ENCODE measurements at regions of chr1 and their contacts with region 1.

Region 1: GRCh38 chr1:54052934-54053744 is at the starts of genes TCEANC2 and TMEM59:
- DNase-seq: peak; percentile 98
- H3K4me3 Mint-ChIP-seq: no peak within 1 kb of the TSS
- H3K27ac Mint-ChIP-seq: no peak within 1 kb of the TSS
- H3K4me1 Mint-ChIP-seq: peaks cover 27% of the 10 kb centered on the region
- H3K27me3 Mint-ChIP-seq: no peaks in the 10 kb centered on the region
- total RNA-seq, gene TCEANC2: 11.8 and 12.0 TPM in 2 replicates
- total RNA-seq, gene TMEM59: 119 and 133 TPM in 2 replicates

Region 2: DNA sequence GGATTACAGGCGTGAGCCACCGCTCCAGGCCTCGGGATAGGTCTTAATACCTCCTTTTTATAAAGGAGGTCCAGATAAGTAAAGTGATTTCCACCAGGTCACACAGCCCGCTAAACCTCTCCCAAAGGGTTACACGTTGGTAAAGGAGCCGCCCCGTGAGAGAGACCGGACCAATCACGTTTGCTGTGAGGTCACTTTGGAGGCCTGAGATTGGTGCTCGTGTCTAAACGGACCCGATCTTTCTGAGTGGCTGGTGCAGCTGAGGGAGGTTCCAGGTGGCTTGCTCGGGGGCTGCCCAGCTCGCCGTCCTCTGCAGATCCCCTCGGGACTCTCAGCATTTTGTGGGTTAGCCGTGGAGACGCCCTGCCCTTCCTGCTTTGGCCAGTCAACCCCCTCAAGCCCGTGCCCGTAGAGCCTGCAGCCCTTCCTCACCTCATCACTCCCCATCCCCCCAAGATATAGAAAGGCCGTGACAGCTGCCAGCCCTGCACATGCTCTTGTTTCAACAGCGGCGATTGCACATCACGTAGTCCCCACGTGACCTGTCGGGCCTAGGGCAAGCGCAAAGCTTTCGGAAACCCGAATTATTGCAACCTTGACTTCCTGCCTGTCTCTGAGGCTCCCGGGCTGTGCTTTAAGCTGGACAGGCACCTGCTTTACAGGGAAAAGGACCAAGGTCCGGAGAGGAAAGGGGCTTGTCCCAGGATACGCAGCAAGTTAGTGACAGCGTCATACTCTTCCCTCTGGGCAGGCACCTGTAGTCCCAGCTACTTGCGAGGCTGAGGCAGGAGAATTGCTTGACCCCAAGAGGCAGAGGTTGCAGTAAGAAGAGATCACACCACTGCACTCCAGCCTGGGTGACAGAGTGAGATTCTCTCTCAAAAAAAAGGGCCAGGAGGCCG is 1350.0 kb before region 1 on chr1:
- intact Hi-C with region 1: loop called (anchors 5 kb)
- DNase-seq: peak; percentile 80
- H3K4me3 Mint-ChIP-seq: peak overlapping the region; percentile 82
- H3K27ac Mint-ChIP-seq: peak overlapping the region; percentile 88
- H3K4me1 Mint-ChIP-seq: peaks cover 32% of the 10 kb centered on the region
- H3K27me3 Mint-ChIP-seq: peaks cover 4% of the 10 kb centered on the region

Region 3: DNA sequence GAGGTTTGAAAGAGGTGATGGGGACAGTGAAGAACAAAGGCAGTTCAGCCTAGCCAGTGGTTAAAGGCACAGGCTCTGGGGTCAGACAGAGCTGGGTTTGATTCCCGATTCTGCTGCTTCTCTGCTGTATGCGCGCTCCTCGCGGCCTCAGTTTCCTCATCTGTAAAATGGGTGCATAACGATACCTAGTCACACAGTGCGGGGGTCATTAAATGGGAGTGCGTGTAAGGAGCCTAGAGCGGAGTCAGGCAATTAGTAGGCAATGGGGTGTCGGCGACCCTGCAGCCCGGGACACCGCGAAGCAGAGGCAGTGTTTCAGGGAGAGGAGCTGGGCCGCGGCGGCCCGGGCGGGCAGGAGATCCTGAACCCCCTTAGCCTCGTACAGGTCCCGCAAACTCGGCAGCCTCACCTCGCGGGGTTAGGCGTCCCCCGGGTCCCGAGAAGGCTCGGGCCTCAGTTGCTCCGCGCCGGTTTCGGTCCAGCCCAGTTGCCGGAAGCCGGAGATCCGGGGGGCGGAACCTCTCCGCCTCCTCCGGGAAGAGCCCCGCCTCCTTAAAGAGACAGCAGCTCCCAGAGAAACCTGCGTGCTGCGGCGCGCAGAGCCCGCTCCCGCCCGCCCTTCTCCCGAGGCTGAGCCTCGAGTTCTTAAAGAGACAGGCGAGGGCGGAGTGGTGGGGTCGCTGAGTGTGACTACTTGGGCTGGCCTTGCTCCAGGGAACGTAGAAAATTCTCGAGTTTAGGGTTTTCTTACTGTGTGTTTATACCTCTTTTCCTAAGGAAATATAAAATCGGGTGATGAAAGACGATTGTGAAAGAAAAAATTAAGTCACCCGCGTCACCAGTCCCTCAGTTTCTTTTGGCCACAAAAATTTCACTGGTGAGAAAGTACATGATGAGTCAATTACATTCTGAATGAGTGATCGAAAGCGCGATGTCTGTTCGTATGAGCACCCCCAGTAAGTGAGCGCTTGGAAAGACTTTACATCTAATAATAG is 163.5 kb before region 1 on chr1 and contains the start of gene YIPF1:
- intact Hi-C with region 1: loop called (anchors 1 kb)
- DNase-seq: peak; percentile 89
- H3K4me3 Mint-ChIP-seq: peak within 1 kb of the TSS; percentile 98
- H3K27ac Mint-ChIP-seq: peak within 1 kb of the TSS; percentile 96
- H3K4me1 Mint-ChIP-seq: peaks cover 26% of the 10 kb centered on the region
- H3K27me3 Mint-ChIP-seq: no peaks in the 10 kb centered on the region
- total RNA-seq, gene YIPF1: 14.7 and 15.2 TPM in 2 replicates

Region 4: GRCh38 chr1:54014009-54014629 is 39.0 kb before region 1 on chr1:
- intact Hi-C with region 1: no loop called
- DNase-seq: no peak
- H3K4me3 Mint-ChIP-seq: no peak overlapping the region
- H3K27ac Mint-ChIP-seq: no peak overlapping the region
- H3K4me1 Mint-ChIP-seq: no peaks in the 10 kb centered on the region
- H3K27me3 Mint-ChIP-seq: peaks cover 2% of the 10 kb centered on the region

Region 5: DNA sequence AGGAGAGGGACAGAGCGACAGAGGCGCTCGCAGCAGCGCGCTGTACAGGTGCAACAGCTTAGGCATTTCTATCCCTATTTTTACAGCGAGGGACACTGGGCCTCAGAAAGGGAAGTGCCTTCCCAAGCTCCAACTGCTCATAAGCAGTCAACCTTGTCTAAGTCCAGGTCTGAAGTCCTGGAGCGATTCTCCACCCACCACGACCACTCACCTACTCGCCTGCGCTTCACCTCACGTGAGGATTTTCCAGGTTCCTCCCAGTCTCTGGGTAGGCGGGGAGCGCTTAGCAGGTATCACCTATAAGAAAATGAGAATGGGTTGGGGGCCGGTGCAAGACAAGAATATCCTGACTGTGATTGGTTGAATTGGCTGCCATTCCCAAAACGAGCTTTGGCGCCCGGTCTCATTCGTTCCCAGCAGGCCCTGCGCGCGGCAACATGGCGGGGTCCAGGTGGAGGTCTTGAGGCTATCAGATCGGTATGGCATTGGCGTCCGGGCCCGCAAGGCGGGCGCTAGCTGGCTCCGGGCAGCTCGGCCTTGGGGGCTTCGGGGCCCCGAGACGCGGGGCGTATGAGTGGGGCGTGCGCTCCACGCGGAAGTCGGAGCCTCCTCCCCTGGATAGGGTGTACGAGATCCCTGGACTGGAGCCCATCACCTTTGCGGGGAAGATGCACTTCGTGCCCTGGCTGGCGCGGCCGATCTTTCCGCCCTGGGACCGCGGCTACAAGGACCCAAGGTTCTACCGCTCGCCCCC is 146.8 kb after region 1 on chr1 and contains the starts of genes CYB5RL and MRPL37:
- intact Hi-C with region 1: loop called (anchors 1 kb)
- DNase-seq: peak; percentile 89
- H3K4me3 Mint-ChIP-seq: peak within 1 kb of the TSS; percentile 90
- H3K27ac Mint-ChIP-seq: peak within 1 kb of the TSS; percentile 60
- H3K4me1 Mint-ChIP-seq: peaks cover 40% of the 10 kb centered on the region
- H3K27me3 Mint-ChIP-seq: no peaks in the 10 kb centered on the region
- total RNA-seq, gene CYB5RL: 8.3 and 11.3 TPM in 2 replicates
- total RNA-seq, gene MRPL37: 145 and 150 TPM in 2 replicates

Region 6: DNA sequence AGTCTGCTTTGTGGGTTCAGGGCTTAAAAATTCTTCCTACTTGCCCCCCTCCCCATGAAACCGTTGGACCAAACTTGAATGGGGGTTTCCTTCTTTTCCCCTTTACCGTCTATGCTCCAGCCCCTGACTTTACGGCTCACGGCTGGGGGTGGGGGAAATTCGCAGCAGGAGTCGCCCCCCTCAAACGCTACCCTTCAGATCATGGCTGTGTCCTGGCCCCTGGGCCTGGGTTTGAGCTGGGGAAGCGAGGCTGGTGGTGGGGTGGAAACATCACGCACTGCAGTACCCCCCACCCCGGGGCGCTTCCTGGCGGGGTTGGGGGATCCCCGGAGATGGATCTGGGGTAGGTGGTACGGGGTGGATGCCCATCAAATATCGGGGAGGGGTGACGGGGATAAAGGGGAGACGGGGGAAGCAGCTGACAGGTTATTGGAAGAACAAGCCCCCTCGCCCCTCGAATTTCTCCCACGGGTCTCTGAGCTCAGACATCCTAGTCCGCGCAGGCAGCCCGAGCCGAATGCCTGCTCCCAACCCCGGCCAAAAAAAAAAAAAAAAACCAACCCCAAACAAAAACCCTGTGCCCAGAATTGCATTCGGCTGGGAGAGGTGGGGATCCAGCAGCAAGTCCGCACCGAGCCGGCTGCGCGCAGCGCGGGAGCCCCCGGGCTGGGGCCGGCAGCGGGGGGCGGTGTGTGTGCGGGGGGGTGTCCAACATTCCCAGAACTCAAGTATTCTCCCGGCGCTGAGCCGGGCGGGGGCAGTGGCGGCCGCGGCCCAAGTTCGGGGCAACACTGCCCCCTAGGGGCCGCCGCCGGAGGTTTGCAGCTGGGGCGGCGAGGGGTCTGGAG is 435.9 kb after region 1 on chr1:
- intact Hi-C with region 1: loop called (anchors 1 kb)
- DNase-seq: peak; percentile 71
- H3K4me3 Mint-ChIP-seq: peak overlapping the region; percentile 86
- H3K27ac Mint-ChIP-seq: peak overlapping the region; percentile 82
- H3K4me1 Mint-ChIP-seq: peaks cover 36% of the 10 kb centered on the region
- H3K27me3 Mint-ChIP-seq: peaks cover 35% of the 10 kb centered on the region

Region 7: GRCh38 chr1:54800899-54801759 is 748.0 kb after region 1 on chr1 and contains the start of gene TTC22:
- intact Hi-C with region 1: loop called (anchors 2 kb)
- DNase-seq: peak; percentile 56
- H3K4me3 Mint-ChIP-seq: peak within 1 kb of the TSS; percentile 85
- H3K27ac Mint-ChIP-seq: peak within 1 kb of the TSS; percentile 80
- H3K4me1 Mint-ChIP-seq: peaks cover 65% of the 10 kb centered on the region
- H3K27me3 Mint-ChIP-seq: no peaks in the 10 kb centered on the region
- total RNA-seq, gene TTC22: 2.2 and 2.3 TPM in 2 replicates

Measured in activated T-helper 1 cell treated with anti-CD3 and anti-CD28 coated beads, Interleukin-12 subunit alpha, Interleukin-12 subunit beta, Interleukin-2, Interleukin-4 antibody, amounts not matched to agents 30 ng/mL and 10 ng/mL and 1 ng/mL, durations not matched to agents 14 hours and 24 hours and 36 hours (primary cell).